Endothelial cell of umbilical vein (primary cell): ENCODE measurements at regions of chr5 and their contacts with region 1.

Region 1: GRCh38 chr5:131524431-131524830 is 110.6 kb downstream of the RAPGEF6 start:
- DNase-seq: no peak
- H3K4me3 ChIP-seq: no peak overlapping the region
- H3K27ac ChIP-seq: no peak overlapping the region
- H3K4me1 ChIP-seq: no peaks in the 10 kb centered on the region
- H3K27me3 ChIP-seq: no peaks in the 10 kb centered on the region
- CTCF ChIP-seq: no peak
- POLR2A ChIP-seq: no peak

Region 2: GRCh38 chr5:131423056-131423455 is 101.4 kb before region 1 on chr5:
- CTCF ChIA-PET with region 1: no interaction called
- POLR2A ChIA-PET with region 1: interaction called, 13 read pairs
- dilution Hi-C with region 1: no loop called
- intact Hi-C with region 1: no loop called
- DNase-seq: peak; percentile 46
- H3K4me3 ChIP-seq: no peak overlapping the region
- H3K27ac ChIP-seq: no peak overlapping the region
- H3K4me1 ChIP-seq: no peaks in the 10 kb centered on the region
- H3K27me3 ChIP-seq: no peaks in the 10 kb centered on the region
- CTCF ChIP-seq: peak; percentile 47 to 56
- POLR2A ChIP-seq: no peak